Activated CD8-positive, alpha-beta memory T cell treated with anti-CD3 and anti-CD28 coated beads, Interleukin-2, amount 10 ng/mL, durations not matched to agents 7 days and 5 days (primary cell): ENCODE measurements at regions of chr19 and their contacts with region 1.

Region 1: DNA sequence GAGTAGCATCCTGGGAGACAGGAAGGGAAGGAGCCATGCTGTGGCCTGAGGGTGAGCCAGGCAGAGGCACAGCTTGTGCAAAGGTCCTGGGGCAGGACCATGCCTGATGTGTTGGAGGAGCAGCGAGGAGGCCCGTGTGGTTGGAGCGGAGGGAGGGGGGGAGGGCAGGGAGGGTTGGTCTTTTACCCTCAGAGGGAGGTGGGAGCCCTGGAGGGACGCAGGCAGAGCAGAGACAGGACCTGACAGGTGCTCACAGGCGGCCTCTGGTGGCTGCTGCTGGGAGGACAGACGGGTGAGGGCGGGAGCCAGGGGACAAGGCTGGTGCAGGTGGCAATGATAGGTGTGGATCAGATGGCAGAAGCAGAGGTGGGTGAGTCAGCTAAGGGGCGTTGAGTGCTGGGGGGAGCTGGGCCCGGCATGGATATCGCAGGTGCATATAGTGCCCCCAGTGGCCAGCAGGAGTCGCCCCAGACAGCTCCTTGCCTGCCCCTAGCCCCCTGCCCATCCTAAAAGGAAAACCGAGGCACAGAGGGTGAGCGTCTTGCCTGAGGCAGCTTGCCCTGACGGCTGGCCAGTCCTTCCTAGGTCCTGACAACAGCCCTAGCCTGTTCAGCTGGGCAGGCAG is 9.8 kb upstream of the GNA15 start:
- DNase-seq: peak; percentile 69
- ATAC-seq: peak; percentile 93
- H3K4me3 Mint-ChIP-seq: no peak overlapping the region
- H3K27ac Mint-ChIP-seq: no peak overlapping the region
- H3K4me1 Mint-ChIP-seq: peaks cover 16% of the 10 kb centered on the region
- H3K27me3 Mint-ChIP-seq: no peaks in the 10 kb centered on the region

Region 2: DNA sequence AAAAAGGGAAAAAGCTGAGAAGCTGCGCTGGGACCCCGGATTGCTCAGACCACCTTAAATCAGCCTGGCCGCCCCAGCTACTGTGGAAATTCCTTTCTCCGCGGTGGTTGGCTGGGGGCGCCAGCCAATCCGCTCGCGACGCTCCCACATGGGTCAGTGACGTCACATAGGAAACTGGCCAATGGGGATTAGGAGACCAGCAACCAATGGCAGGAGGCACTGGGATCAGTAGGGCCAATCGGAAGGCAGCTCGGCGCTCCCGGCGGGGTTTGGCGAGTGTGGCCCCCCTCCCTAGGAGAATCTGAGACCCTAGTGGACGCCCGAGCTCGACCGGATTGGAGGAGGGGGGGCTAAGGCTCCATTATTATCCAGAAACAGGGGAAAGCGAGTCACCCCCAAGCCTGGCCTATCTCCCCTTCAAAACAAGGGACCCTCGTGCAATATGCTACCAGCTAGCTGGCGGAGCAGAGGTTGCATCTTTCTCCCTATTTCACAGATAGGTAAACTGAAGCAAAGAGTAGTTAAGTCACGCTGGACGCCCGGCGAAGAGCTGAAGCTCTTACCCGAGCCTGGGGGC is 90.4 kb before region 1 on chr19:
- CTCF ChIA-PET with region 1: interaction called, 11 read pairs
- DNase-seq: peak; percentile 98
- ATAC-seq: peak; percentile 96
- H3K4me3 Mint-ChIP-seq: peak overlapping the region; percentile 73
- H3K27ac Mint-ChIP-seq: peak overlapping the region; percentile 94
- H3K4me1 Mint-ChIP-seq: peaks cover 12% of the 10 kb centered on the region
- H3K27me3 Mint-ChIP-seq: peaks cover 28% of the 10 kb centered on the region

Region 3: GRCh38 chr19:3163230-3163886 is 37.3 kb after region 1 on chr19:
- CTCF ChIA-PET with region 1: interaction called, 28 read pairs
- DNase-seq: peak; percentile 82
- ATAC-seq: peak; percentile 90
- H3K4me3 Mint-ChIP-seq: no peak overlapping the region
- H3K27ac Mint-ChIP-seq: peak overlapping the region; percentile 46
- H3K4me1 Mint-ChIP-seq: peaks cover 45% of the 10 kb centered on the region
- H3K27me3 Mint-ChIP-seq: no peaks in the 10 kb centered on the region